Ascending aorta (tissue), 2 donors: ENCODE measurements at regions of chr9 and their contacts with region 1.

Region 1: DNA sequence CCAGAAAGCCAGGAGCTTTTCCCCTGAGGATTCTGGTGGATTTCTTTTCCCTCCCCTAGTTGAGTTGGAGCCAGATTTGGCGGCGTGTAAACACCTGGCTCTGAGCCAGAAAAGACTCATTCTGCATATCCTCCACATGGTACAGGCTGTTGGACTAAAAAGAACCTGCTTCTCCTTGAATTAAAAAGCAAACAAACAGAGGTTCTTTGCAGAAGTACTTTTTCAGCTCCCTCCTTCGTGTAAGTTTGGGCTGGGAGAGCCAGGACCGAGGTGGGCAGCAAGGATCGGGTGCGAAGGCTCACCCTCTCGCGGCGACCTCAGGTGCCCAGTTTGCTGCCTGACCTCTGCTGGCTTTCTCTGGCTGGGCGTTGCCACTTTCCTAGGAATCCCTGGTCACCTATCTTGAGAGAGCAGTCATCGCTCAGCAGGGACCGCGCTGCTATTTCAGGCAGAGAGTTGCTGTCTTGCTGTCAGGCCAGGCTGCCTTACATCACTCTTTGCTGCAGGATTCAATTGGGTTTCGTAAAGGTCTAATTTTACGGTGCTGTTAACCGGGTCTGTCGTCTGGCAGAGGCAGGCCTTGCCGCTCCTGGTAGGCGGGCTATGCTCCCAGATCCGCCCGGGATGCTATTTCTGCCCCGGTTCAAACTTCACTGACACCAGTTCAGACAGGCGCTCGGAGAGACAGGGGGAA is 3.2 kb downstream of the PAPPA start:
- DNase-seq: peak; percentile 62 to 90
- H3K4me3 ChIP-seq: peak overlapping the region in 1 of 2 donors; percentile 86
- H3K27ac ChIP-seq: peak overlapping the region; percentile 86 to 89
- H3K4me1 ChIP-seq: peaks cover 0 to 9% of the 10 kb centered on the region in 2 donors
- H3K27me3 ChIP-seq: no peaks in the 10 kb centered on the region
- CTCF ChIP-seq: no peak

Region 2: DNA sequence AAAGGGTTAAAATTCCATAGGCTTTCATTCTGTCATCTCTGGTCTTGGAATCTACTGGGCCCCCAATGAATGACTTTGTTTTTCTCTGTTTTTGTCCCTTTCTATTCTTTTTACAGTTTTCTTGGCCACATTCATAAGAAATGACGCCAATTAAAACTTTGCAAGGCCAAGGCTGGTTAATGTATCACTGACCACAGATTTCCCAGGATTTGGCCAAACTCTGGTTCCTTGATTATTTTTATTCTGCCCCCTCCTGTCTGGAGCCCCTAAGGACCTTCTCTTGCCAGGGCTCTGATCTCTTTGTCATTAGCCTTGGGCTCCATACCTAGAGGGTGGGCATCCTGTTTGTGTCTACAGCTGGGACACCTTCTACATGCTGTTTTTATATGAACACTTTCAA is 392.1 kb before region 1 on chr9:
- intact Hi-C with region 1: loop called (anchors 1 kb)
- DNase-seq: peak in 1 of 2 donors; percentile 65
- H3K4me3 ChIP-seq: no peak overlapping the region
- H3K27ac ChIP-seq: peak overlapping the region; percentile 72 to 81
- H3K4me1 ChIP-seq: peaks cover 10 to 17% of the 10 kb centered on the region in 2 donors
- H3K27me3 ChIP-seq: no peaks in the 10 kb centered on the region
- CTCF ChIP-seq: no peak

Region 3: GRCh38 chr9:116027556-116028350 is 129.0 kb before region 1 on chr9:
- intact Hi-C with region 1: no loop called
- DNase-seq: no peak
- H3K4me3 ChIP-seq: no peak overlapping the region
- H3K27ac ChIP-seq: no peak overlapping the region
- H3K4me1 ChIP-seq: no peaks in the 10 kb centered on the region
- H3K27me3 ChIP-seq: no peaks in the 10 kb centered on the region
- CTCF ChIP-seq: no peak

Region 4: GRCh38 chr9:116075191-116075590 is 81.6 kb before region 1 on chr9:
- intact Hi-C with region 1: no loop called
- DNase-seq: no peak
- H3K4me3 ChIP-seq: no peak overlapping the region
- H3K27ac ChIP-seq: no peak overlapping the region
- H3K4me1 ChIP-seq: no peaks in the 10 kb centered on the region
- H3K27me3 ChIP-seq: no peaks in the 10 kb centered on the region
- CTCF ChIP-seq: no peak

Region 5: DNA sequence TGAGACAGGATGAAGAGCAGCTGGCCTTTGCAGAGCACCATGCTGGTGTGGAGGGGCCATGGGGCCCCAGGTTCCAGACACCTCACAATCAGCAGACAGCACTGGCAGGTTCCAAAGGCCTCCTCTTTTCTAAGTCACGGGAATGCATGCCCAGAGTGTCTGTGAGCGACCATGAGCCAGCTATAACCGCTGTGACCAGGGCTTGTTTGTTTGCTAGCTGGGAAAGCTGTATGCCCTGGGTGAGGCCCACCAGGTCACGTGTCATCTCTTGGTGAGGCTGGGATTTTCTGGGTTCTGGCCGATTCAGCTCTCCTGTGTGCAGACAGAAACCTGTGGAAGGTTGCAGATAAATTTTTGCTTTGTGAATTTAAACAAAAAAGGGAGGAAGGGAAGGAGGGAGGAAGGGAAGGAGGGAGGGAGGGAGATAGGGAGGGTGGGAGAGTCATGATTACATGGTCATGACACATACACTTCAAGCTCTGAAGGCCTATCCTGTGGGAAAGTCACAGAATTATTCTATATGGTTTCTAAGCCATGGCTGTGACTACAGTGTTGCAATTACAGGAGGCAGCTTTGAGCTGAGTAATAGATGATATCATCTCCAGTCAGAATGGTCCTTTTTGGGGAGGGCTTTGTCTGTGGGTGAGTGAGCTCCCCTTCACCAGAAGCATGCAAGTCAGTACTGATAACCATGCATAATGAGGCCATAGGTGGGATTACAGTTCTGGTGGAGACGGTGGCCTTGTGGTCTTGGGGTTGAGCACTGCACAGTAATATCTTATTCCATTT is 34.1 kb after region 1 on chr9:
- intact Hi-C with region 1: no loop called
- DNase-seq: no peak
- H3K4me3 ChIP-seq: no peak overlapping the region
- H3K27ac ChIP-seq: no peak overlapping the region
- H3K4me1 ChIP-seq: no peaks in the 10 kb centered on the region
- H3K27me3 ChIP-seq: no peaks in the 10 kb centered on the region
- CTCF ChIP-seq: no peak

Region 6: GRCh38 chr9:116687074-116687753 is 530.4 kb after region 1 on chr9 and contains the start of gene TRIM32:
- intact Hi-C with region 1: loop called (anchors 1 kb)
- DNase-seq: peak; percentile 59 to 93
- H3K4me3 ChIP-seq: peak within 1 kb of the TSS; percentile 69 to 81
- H3K27ac ChIP-seq: peak within 1 kb of the TSS; percentile 66 to 81
- H3K4me1 ChIP-seq: peaks cover 0 to 19% of the 10 kb centered on the region in 2 donors
- H3K27me3 ChIP-seq: no peaks in the 10 kb centered on the region
- CTCF ChIP-seq: no peak
- total RNA-seq, gene TRIM32: 2.6 TPM